B cell (primary cell): ENCODE measurements at regions of chr2 and their contacts with region 1.

Region 1: GRCh38 chr2:65264821-65265670 is 37.4 kb downstream of the ACTR2 start:
- DNase-seq: peak; percentile 62
- ATAC-seq: no peak
- H3K4me3 ChIP-seq: no peak overlapping the region
- H3K4me3 Mint-ChIP-seq: no peak overlapping the region
- H3K27ac ChIP-seq: no peak overlapping the region
- H3K27ac Mint-ChIP-seq: no peak overlapping the region
- H3K4me1 ChIP-seq: no peaks in the 10 kb centered on the region
- H3K4me1 Mint-ChIP-seq: peaks cover 2% of the 10 kb centered on the region
- H3K27me3 ChIP-seq: no peaks in the 10 kb centered on the region
- H3K27me3 Mint-ChIP-seq: no peaks in the 10 kb centered on the region
- CTCF ChIP-seq: peak; percentile 82

Region 2: DNA sequence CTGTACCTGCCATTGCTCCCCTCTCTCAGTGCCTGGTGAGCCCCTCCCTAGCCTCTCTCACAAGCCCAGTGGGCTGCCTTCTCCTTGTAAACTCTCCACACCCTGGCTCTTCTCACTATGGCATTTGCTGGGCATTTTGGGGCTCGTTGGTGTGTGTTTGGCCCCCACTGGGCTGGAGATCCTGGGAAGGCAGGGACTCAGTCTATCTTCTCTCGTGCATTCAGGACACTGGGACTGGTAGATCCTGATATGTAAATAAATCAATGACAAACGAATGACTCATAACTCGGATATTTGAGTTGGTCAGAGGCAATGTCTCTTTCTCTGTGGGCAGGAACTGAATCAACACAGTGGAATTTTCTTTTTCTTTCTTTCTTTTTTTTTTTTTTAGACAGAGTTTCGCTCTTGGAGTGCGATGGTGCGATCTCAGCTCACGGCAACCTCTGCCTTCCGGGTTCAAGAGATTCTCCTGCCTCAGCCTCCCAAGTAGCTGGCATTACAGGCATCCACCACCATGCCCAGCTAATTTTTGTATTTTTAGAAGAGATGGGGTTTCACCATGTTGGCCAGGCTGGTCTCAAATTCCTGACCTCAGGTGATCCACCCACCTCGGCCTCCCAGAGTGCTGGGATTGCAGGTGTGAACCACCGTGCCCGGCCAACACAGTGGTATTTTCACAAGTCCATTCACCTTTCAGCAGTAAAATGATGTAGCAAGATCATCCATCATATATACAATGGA is 312.0 kb after region 1 on chr2:
- CTCF ChIA-PET with region 1: interaction called, 8 read pairs
- POLR2A ChIA-PET with region 1: no interaction called
- intact Hi-C with region 1: loop called (anchors 1 kb)
- DNase-seq: no peak
- ATAC-seq: no peak
- H3K4me3 ChIP-seq: no peak overlapping the region
- H3K4me3 Mint-ChIP-seq: no peak overlapping the region
- H3K27ac ChIP-seq: no peak overlapping the region
- H3K27ac Mint-ChIP-seq: no peak overlapping the region
- H3K4me1 ChIP-seq: peaks cover 0 to 2% of the 10 kb centered on the region in 2 donors
- H3K4me1 Mint-ChIP-seq: peaks cover 6% of the 10 kb centered on the region
- H3K27me3 ChIP-seq: no peaks in the 10 kb centered on the region
- H3K27me3 Mint-ChIP-seq: no peaks in the 10 kb centered on the region
- CTCF ChIP-seq: no peak

Region 3: GRCh38 chr2:66343238-66343637 is 1078.2 kb after region 1 on chr2:
- CTCF ChIA-PET with region 1: no interaction called
- POLR2A ChIA-PET with region 1: interaction called, 10 read pairs
- intact Hi-C with region 1: no loop called
- DNase-seq: no peak
- ATAC-seq: no peak
- H3K4me3 ChIP-seq: no peak overlapping the region
- H3K4me3 Mint-ChIP-seq: no peak overlapping the region
- H3K27ac ChIP-seq: no peak overlapping the region
- H3K27ac Mint-ChIP-seq: no peak overlapping the region
- H3K4me1 ChIP-seq: no peaks in the 10 kb centered on the region
- H3K4me1 Mint-ChIP-seq: no peaks in the 10 kb centered on the region
- H3K27me3 ChIP-seq: no peaks in the 10 kb centered on the region
- H3K27me3 Mint-ChIP-seq: no peaks in the 10 kb centered on the region
- CTCF ChIP-seq: no peak